AG04449 (cell line): ENCODE measurements at regions of chr7 and their contacts with region 1.

Region 1: DNA sequence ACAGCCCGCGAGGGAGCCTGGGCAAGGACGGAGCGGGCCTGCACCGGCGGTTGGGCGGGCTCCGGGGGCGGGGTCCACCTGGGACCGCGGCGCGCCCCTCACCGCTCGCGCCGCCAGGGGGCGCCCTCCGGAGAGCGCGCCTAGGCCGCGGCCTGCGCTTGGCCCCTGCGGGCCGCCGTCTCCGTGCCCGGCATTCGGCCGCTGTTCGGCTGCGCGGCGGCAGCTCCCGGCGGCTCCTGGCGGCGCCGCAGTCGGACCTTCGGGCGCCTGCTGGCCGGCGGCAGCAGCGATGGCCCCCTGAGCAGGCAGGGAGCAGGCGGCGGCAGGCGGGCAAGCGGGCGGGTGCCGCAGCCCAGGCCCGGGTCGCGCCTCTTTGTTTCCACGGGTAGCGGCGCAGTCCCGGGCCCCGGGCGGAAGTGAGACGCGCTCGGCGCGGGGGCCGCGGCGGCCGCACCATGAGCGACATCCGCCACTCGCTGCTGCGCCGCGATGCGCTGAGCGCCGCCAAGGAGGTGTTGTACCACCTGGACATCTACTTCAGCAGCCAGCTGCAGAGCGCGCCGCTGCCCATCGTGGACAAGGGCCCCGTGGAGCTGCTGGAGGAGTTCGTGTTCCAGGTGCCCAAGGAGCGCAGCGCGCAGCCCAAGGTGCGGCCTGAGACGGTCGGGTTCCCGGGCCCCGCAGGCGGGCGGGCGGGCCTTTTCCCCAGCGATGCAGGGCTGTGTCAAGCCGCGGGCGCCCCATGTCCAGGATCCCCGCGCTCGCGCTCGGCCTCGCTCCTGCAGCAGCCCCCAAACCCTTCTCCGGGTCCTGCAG is at the start of gene INTS15:
- DNase-seq: no peak
- H3K4me3 ChIP-seq: peak within 1 kb of the TSS; percentile 93
- CTCF ChIP-seq: peak; percentile 53

Region 2: DNA sequence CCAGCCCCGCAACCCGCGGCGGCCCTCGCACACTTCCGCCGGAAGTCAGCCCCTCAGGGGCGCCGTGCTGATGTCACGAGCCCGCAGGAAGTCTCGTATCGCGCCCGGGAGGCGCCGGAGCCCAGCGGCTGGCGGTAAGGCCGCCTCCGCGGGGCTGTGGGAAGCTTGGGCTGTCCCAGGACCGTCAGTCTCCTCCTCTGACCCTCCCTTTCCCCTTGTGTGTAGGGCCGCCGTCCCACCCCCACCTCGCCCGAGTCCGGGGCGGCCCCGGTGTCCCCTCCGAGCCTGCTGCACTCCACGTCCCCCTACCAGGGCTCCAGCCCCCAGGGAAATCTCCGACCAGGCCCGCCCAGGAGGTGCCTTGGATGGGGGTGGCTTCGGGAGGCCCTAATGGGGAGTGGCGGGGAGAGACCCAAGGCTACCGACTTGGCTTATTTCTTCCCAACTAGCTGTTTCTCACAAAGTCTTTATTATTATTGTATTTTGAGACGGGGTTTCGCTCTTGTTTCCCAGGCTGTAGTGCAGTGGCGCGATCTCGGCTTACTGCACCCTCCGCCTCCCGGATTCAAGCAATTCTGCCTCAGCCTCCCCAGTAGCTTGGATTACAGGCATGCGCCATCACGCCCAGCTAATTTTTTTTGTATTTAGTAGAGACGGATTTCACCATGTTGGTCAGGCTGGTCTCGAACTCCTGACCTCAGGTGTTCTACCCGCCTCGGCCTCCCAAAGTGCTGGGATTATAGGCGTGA is 12.5 kb before region 1 on chr7 and contains the start of gene ZDHHC4:
- CTCF ChIA-PET with region 1: interaction called, 63 read pairs
- POLR2A ChIA-PET with region 1: interaction called, 21 read pairs
- DNase-seq: peak; percentile 33
- H3K4me3 ChIP-seq: peak within 1 kb of the TSS; percentile 74
- CTCF ChIP-seq: no peak

Region 3: DNA sequence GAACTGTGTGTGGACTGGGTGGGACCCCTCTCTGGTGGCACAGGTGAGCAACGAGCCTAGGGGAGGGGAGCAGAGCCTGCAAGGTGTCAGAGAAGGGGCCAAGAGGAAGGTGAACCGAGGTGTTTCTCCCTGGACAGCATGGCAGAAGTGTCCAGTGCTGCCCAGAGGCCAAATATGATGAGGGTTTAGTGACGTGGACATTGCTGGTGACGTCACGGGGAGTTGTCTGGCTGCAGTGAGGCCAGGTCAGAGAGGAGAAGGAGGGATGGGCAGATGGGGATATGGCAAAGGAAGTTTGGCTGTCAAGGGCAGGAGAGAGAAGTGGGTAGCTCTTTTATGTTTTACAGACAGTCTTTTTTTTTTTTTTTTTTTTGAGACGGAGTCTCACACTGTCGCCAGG is 22.8 kb after region 1 on chr7:
- CTCF ChIA-PET with region 1: interaction called, 13 read pairs
- POLR2A ChIA-PET with region 1: interaction called, 3 read pairs
- DNase-seq: no peak
- H3K4me3 ChIP-seq: no peak overlapping the region
- CTCF ChIP-seq: no peak